Pancreas (tissue), 10 donors: ENCODE measurements at regions of chr2 and their contacts with region 1.

Region 1: DNA sequence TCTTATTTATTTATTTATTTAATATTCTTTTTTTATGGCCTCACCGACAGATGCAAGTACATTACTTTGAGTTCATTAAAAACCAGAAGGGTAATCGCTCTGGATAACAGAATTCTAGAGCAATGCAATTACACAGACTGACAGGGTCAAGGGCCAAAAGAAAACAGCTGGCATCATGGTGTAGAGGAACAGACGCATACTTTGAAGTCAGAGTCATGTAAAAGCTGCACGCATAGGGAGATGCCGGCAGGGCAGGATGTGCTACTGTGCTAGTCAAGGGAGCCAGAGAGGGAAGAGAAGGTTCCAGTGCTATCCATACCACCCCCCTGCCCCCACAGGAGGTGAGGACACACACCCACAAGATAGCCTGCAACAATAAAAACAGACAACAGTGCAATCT is 115.2 kb upstream of the TFCP2L1 start:
- DNase-seq: no peak
- ATAC-seq: no peak
- H3K4me3 ChIP-seq: no peak overlapping the region
- H3K27ac ChIP-seq: no peak overlapping the region
- H3K4me1 ChIP-seq: no peaks in the 10 kb centered on the region
- H3K27me3 ChIP-seq: no peaks in the 10 kb centered on the region
- CTCF ChIP-seq: no peak

Region 2: DNA sequence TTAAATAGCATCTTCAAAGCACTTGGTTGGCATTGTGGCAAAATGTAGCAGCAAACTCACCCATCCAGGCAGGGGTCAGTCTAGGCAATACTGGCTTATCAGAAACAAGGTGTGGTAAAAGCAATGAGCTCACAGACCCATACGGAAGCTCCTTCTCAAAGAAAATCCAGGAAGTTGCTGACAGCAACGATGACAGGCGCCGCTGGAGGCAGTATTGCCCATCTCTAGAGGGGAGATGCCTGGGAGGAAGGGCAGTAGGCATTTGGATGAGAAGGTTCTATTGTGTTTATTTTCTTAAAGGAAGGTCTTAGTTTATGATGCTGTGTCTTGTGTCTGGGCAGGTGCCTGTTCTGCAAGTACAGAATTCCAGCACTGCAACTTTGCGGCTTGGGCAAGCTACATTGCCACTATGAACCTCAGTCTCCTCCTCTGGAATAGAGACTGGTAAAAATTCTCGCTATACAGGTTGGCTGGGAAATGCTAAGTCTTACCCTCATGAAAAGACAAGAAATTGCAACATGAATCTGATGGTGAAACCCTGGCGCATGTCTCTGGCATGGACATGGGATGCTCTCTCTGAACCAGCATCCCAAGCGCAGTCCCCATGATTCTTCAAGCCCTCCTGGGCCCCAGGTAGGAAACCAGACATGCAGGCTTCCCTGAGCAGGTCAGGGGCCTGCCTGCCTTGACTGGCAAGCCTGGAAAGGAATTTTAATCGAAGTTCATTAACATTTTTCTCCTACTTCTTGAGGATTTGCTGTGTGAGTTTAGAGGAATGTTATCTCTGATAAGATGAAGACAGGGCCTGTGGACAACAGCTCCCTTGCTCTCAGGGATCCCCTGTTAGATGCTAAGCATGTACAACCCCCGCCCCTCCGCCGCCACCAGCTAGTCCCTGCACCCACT is 271.2 kb before region 1 on chr2:
- intact Hi-C with region 1: no loop called
- DNase-seq: peak in 5 of 6 donors; percentile 30 to 77 (median 64)
- ATAC-seq: peak; percentile 81 to 95 (median 92)
- H3K4me3 ChIP-seq: no peak overlapping the region
- H3K27ac ChIP-seq: no peak overlapping the region
- H3K4me1 ChIP-seq: no peaks in the 10 kb centered on the region
- H3K27me3 ChIP-seq: no peaks in the 10 kb centered on the region
- CTCF ChIP-seq: peak in 3 of 4 donors; percentile 41 to 48 (median 46)

Region 3: GRCh38 chr2:121634354-121635307 is 234.4 kb after region 1 on chr2:
- intact Hi-C with region 1: no loop called
- DNase-seq: no peak
- ATAC-seq: peak in 2 of 4 donors; percentile 18 to 22
- H3K4me3 ChIP-seq: no peak overlapping the region
- H3K27ac ChIP-seq: no peak overlapping the region
- H3K4me1 ChIP-seq: peaks cover 0 to 15% (median 9%) of the 10 kb centered on the region in 3 donors
- H3K27me3 ChIP-seq: no peaks in the 10 kb centered on the region
- CTCF ChIP-seq: no peak

Region 4: GRCh38 chr2:121722479-121722878 is 322.3 kb after region 1 on chr2:
- intact Hi-C with region 1: loop called in 2 of 3 experiments (anchors 5 kb)
- DNase-seq: no peak
- ATAC-seq: peak in 1 of 4 donors; percentile 34
- H3K4me3 ChIP-seq: no peak overlapping the region
- H3K27ac ChIP-seq: peak overlapping the region in 1 of 4 donors; percentile 7
- H3K4me1 ChIP-seq: no peaks in the 10 kb centered on the region
- H3K27me3 ChIP-seq: no peaks in the 10 kb centered on the region
- CTCF ChIP-seq: no peak